Breast epithelium (tissue), 4 donors: ENCODE measurements at regions of chr3 and their contacts with region 1.

Region 1: GRCh38 chr3:164416491-164417234 is 661.6 kb downstream of the SI start:
- DNase-seq: no peak
- H3K4me3 ChIP-seq: no peak overlapping the region
- H3K27ac ChIP-seq: no peak overlapping the region
- H3K4me1 ChIP-seq: no peaks in the 10 kb centered on the region
- H3K27me3 ChIP-seq: no peaks in the 10 kb centered on the region
- CTCF ChIP-seq: no peak
- POLR2A ChIP-seq: no peak

Region 2: DNA sequence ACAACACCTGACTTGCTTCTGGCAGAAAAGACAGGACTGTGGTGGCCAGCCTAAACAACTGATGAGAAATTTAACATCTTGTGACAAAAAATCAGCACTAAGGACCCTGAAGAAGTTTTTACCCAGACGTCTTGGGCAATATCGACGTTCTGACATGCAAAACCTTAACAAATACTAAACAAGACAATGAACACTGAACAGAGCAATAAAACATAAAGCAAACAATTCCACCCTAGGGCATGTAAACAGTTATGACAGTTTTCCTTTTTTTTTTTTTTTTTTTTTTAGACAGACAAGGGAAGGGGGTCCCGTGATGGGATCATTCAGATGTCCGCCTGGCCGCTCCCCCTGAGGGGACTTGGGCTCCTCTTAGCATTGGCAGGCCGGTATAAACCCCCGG is 76.4 kb before region 1 on chr3:
- intact Hi-C with region 1: no loop called
- DNase-seq: no peak
- H3K4me3 ChIP-seq: no peak overlapping the region
- H3K27ac ChIP-seq: no peak overlapping the region
- H3K4me1 ChIP-seq: no peaks in the 10 kb centered on the region
- H3K27me3 ChIP-seq: no peaks in the 10 kb centered on the region
- CTCF ChIP-seq: no peak
- POLR2A ChIP-seq: no peak

Region 3: GRCh38 chr3:164371681-164372080 is 45.0 kb before region 1 on chr3:
- intact Hi-C with region 1: loop called (anchors 2 kb)
- DNase-seq: no peak
- H3K4me3 ChIP-seq: no peak overlapping the region
- H3K27ac ChIP-seq: no peak overlapping the region
- H3K4me1 ChIP-seq: no peaks in the 10 kb centered on the region
- H3K27me3 ChIP-seq: no peaks in the 10 kb centered on the region
- CTCF ChIP-seq: no peak
- POLR2A ChIP-seq: no peak

Region 4: DNA sequence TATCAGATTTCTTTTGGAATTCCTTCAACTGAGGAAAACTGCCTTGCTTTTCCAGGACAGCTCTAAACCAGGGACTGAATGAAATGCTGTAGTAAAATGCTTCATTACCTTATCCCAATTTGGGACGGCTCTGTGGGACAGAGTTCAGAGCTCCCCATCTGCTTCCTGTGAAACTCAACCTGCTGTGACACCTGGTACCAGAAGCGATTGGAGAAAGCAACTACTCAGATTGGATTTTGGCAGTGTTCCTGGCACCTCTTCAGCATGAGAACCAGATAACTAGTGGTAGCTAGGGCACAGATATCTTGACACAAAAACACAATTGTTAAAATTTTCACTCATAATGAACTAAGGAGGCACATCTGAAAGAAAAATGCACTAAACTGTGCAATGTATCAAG is 122.6 kb after region 1 on chr3:
- intact Hi-C with region 1: no loop called
- DNase-seq: no peak
- H3K4me3 ChIP-seq: no peak overlapping the region
- H3K27ac ChIP-seq: no peak overlapping the region
- H3K4me1 ChIP-seq: no peaks in the 10 kb centered on the region
- H3K27me3 ChIP-seq: no peaks in the 10 kb centered on the region
- CTCF ChIP-seq: no peak
- POLR2A ChIP-seq: no peak